ENCODE measurements at regions of chr9 and their contacts with region 1.

Region 1: GRCh38 chr9:83707768-83708514 is at the start of gene UBQLN1:
- DNase-seq: peak; percentile 83 to 98 (median 92)
- ATAC-seq: peak; percentile 82 to 83
- H3K4me3 Mint-ChIP-seq: peak within 1 kb of the TSS; percentile 85 to 100 (median 94)
- H3K27ac Mint-ChIP-seq: peak within 1 kb of the TSS; percentile 96 to 100 (median 99)
- H3K4me1 Mint-ChIP-seq: peaks cover 26 to 50% (median 42%) of the 10 kb centered on the region in 4 donors
- H3K27me3 Mint-ChIP-seq: no peaks in the 10 kb centered on the region
- polyA plus RNA-seq, gene UBQLN1: 65.4 to 70.8 (median 67.6) TPM

Region 2: DNA sequence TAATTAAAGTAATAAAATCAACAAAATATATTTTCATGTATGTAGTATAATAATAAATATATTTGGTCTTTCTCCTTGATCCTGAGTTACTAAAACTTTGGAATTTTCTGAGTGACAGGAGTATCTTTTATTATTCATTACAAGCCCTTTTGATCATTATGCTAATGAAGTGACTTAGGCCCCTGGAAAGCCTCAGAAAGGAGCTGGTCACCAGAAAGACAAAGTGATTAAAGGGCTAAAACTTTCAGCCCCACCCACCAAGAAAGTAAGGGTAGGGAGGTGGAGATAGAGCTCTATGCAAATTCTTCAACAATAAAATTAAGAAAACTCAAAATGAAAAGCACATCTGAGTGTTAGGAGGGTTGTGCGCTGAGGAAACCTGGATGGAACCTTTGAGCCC is 27.7 kb before region 1 on chr9:
- POLR2A ChIA-PET with region 1: interaction called, 10 read pairs
- DNase-seq: no peak
- ATAC-seq: no peak
- H3K4me3 Mint-ChIP-seq: no peak overlapping the region
- H3K27ac Mint-ChIP-seq: peak overlapping the region in 2 of 10 donors; percentile 56 to 67
- H3K4me1 Mint-ChIP-seq: peaks cover 10 to 33% (median 15%) of the 10 kb centered on the region in 4 donors
- H3K27me3 Mint-ChIP-seq: no peaks in the 10 kb centered on the region

Region 3: GRCh38 chr9:83733739-83734138 is 25.8 kb after region 1 on chr9:
- POLR2A ChIA-PET with region 1: no interaction called
- DNase-seq: no peak
- ATAC-seq: no peak
- H3K4me3 Mint-ChIP-seq: no peak overlapping the region
- H3K27ac Mint-ChIP-seq: no peak overlapping the region
- H3K4me1 Mint-ChIP-seq: no peaks in the 10 kb centered on the region
- H3K27me3 Mint-ChIP-seq: no peaks in the 10 kb centered on the region

Region 4: GRCh38 chr9:83800201-83801033 is 92.5 kb after region 1 on chr9:
- POLR2A ChIA-PET with region 1: no interaction called
- DNase-seq: no peak
- ATAC-seq: no peak
- H3K4me3 Mint-ChIP-seq: no peak overlapping the region
- H3K27ac Mint-ChIP-seq: no peak overlapping the region
- H3K4me1 Mint-ChIP-seq: peaks cover 0 to 6% (median 2%) of the 10 kb centered on the region in 4 donors
- H3K27me3 Mint-ChIP-seq: no peaks in the 10 kb centered on the region

Region 5: DNA sequence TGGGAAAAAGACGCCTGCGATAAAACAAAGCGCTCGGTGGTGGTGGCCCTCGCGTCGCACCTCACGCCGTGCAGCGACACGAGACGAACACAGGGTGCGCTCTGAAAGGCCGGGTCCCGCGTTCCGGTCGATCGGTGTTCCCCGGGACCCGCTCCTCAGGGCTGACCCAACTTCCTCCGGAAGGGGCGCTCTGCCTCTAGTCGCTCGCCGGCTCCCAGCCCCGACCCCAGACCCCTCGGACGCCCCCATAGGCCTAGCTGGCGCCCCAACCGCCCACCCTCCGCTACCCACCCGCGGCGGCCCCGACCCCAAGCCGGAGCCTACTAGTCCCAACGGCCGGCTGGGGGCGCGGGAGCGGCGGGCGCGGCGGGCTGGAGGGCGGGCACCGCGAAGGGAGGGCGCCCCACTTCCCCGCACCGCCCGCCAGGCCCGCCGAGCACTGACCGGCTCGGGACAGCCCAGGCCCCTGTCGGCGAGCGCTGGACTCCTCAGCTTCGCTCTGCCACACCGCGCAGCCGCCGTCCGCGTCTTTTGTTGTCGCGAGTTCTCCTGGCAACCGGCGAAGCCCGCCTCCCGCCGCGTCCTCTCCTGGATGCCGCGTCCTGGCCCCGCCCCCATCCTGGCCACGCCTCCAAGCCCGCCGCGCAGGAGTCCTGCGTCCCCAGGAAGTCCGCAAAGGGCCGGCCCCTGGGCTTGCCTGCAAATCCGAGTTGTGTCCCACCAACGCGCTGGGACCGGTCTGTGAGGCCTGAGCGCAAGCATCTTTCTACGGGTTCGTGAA is 213.2 kb after region 1 on chr9 and contains the start of gene KIF27:
- POLR2A ChIA-PET with region 1: interaction called, 29 read pairs
- DNase-seq: peak; percentile 89 to 98 (median 94)
- ATAC-seq: peak; percentile 78 to 83
- H3K4me3 Mint-ChIP-seq: peak within 1 kb of the TSS; percentile 88 to 96 (median 92)
- H3K27ac Mint-ChIP-seq: peak within 1 kb of the TSS; percentile 81 to 99 (median 98)
- H3K4me1 Mint-ChIP-seq: peaks cover 5 to 17% (median 14%) of the 10 kb centered on the region in 4 donors
- H3K27me3 Mint-ChIP-seq: no peaks in the 10 kb centered on the region
- polyA plus RNA-seq, gene KIF27: 1.1 to 2.1 (median 1.3) TPM

Measured in naive thymus-derived CD8-positive, alpha-beta T cell (primary cell).